ENCODE measurements at regions of chr14 and their contacts with region 1.

Region 1: DNA sequence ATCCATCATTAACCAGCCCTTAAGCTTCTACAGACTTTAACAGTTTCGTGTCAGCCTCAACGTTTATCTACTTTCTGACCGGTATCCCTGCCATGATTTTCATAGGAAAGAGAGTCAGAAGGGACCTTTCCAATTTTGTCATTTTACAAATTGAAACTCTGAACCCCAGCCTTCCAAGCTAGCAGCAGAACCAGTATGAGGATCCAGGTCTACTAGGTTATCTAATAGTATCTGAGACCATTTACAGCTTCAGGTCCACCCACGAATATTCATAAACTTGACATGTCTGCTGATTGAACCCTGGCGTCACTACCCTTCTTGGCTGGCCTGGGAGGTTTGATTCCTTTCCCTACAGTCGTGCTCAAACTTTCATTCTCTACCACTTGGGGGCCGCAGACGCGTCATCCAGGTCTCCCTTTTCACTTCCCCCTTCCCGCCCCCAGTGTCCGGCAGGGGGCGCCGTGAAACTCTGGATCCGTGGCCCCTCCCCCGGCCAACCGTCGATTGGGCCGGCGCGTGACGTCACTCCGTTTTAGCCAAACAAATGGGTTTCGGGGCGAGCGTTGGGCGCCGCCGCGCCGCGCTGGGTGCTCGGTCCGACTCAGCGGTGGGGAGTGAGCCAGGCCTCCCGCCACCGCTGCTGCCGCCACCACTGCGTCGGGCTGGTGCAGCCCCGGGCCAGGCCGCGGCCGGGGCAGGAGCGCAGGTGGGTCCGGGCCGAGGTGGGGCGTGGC is at the start of gene FBXO34:
- DNase-seq: peak; percentile 99
- H3K4me3 Mint-ChIP-seq: peak within 1 kb of the TSS; percentile 87
- H3K27ac Mint-ChIP-seq: peak within 1 kb of the TSS; percentile 90
- H3K4me1 Mint-ChIP-seq: peaks cover 39% of the 10 kb centered on the region
- H3K27me3 Mint-ChIP-seq: peaks cover 2% of the 10 kb centered on the region
- total RNA-seq, gene FBXO34: 19.8 to 22.0 TPM

Region 2: DNA sequence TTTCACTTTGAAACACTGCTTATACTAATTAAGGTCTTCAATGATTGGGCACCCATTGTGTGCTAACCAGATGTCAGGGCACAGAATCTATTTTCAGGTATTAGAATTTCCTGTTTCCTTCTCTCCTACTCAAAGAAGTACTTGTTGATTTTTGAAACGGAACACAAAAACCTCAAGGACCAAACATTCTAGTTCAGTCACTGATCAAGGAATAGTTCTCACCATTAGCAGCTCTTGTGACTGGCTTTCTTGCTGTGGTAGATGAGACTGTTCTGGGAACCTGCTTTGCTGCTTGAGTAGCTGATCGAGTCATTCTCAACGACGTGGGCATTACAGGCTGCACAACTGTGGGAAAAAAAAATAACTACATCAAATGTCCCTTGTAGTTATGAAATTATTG is 90.6 kb before region 1 on chr14:
- CTCF ChIA-PET with region 1: no interaction called
- POLR2A ChIA-PET with region 1: no interaction called
- intact Hi-C with region 1: no loop called
- DNase-seq: no peak
- H3K4me3 Mint-ChIP-seq: no peak overlapping the region
- H3K27ac Mint-ChIP-seq: no peak overlapping the region
- H3K4me1 Mint-ChIP-seq: peaks cover 9% of the 10 kb centered on the region
- H3K27me3 Mint-ChIP-seq: no peaks in the 10 kb centered on the region

Region 3: GRCh38 chr14:55212634-55213033 is 58.4 kb before region 1 on chr14:
- CTCF ChIA-PET with region 1: interaction called, 5 read pairs
- POLR2A ChIA-PET with region 1: no interaction called
- intact Hi-C with region 1: loop called (anchors 2 kb)
- DNase-seq: no peak
- H3K4me3 Mint-ChIP-seq: no peak overlapping the region
- H3K27ac Mint-ChIP-seq: no peak overlapping the region
- H3K4me1 Mint-ChIP-seq: peaks cover 2% of the 10 kb centered on the region
- H3K27me3 Mint-ChIP-seq: no peaks in the 10 kb centered on the region

Region 4: DNA sequence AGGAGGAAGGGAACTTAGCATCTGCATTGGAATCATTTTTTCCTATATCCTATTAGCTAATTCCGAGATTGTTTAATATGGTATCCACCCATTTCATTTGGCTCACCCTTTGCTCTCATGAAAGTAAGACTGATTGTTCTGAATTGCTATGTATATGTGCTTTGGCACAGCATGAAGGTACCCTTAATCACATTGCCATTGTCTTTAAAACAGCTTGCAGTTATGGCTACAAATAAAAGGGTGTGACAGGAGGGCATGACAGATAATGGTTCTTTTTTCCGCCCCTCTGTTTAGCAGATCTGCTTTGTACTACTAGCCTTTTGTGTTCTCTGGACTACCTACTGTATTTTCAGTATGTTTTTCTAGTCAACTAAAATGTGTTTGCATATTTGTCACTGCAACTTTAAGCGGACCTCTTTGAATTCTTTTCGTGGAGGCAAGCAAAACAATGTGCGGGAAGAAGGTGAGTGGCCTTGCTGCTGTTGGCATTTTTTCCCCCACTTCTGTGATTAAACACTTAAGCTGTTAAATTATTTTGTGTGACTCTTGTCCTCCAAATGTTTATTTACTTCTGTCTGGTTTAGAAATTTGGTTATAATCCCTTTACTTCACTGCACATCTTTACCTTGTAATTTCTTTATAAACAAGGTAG is 36.1 kb after region 1 on chr14:
- CTCF ChIA-PET with region 1: interaction called, 5 read pairs
- POLR2A ChIA-PET with region 1: interaction called, 4 read pairs
- intact Hi-C with region 1: loop called (anchors 5 kb)
- DNase-seq: no peak
- H3K4me3 Mint-ChIP-seq: no peak overlapping the region
- H3K27ac Mint-ChIP-seq: no peak overlapping the region
- H3K4me1 Mint-ChIP-seq: peaks cover 42% of the 10 kb centered on the region
- H3K27me3 Mint-ChIP-seq: no peaks in the 10 kb centered on the region

Region 5: GRCh38 chr14:55348766-55349453 is 77.9 kb after region 1 on chr14:
- CTCF ChIA-PET with region 1: interaction called, 180 read pairs
- POLR2A ChIA-PET with region 1: no interaction called
- intact Hi-C with region 1: loop called (anchors 1 kb)
- DNase-seq: peak; percentile 29
- H3K4me3 Mint-ChIP-seq: peak overlapping the region; percentile 9
- H3K27ac Mint-ChIP-seq: no peak overlapping the region
- H3K4me1 Mint-ChIP-seq: peaks cover 58% of the 10 kb centered on the region
- H3K27me3 Mint-ChIP-seq: no peaks in the 10 kb centered on the region

Region 6: GRCh38 chr14:55411426-55412389 is 140.7 kb after region 1 on chr14 and contains the start of gene ATG14:
- CTCF ChIA-PET with region 1: interaction called, 9 read pairs
- POLR2A ChIA-PET with region 1: no interaction called
- intact Hi-C with region 1: loop called (anchors 1 kb)
- DNase-seq: peak; percentile 87
- H3K4me3 Mint-ChIP-seq: peak within 1 kb of the TSS; percentile 79
- H3K27ac Mint-ChIP-seq: peak within 1 kb of the TSS; percentile 71
- H3K4me1 Mint-ChIP-seq: peaks cover 31% of the 10 kb centered on the region
- H3K27me3 Mint-ChIP-seq: no peaks in the 10 kb centered on the region
- total RNA-seq, gene ATG14: 5.0 to 5.1 TPM

Region 7: DNA sequence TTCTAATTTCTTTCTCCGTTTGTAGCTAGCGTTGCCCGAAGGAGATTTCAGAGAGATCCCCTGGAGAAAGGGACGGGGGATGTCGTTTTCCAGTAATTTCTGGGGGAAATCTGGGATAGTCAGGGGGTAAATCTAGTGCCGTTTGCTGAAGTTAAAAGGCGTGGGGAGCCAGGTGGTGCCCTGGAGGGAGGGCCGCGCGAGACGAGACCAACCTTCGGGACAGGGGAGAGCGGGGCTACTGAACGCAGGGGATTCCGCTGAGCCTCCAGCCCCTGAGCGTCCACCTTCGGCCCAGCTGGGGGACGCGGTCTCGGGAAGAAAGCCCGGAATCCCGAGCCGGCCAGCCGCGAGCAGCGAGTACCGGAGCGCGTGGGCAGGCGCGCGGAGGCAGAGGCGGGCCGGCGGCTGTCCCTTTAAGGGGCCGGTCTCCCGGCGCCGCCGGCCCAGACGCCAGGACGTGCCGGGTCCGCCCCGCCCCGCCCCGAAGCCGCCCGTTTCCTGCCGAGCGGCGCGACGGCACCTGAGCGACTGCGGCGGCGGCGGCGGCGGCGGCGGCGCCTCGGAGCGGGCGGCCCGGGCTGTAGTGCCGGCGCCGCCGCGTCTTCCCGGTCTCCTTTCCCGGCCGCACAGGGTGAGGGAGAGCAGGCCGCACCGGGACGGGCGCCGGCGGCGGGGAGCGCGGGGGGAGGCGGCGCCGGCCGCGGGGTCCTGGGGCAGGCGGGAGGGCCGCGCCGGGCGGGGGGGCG is 308.9 kb after region 1 on chr14 and contains the start of gene KTN1:
- CTCF ChIA-PET with region 1: interaction called, 4 read pairs
- POLR2A ChIA-PET with region 1: no interaction called
- intact Hi-C with region 1: loop called (anchors 5 kb)
- DNase-seq: peak; percentile 87
- H3K4me3 Mint-ChIP-seq: peak within 1 kb of the TSS; percentile 92
- H3K27ac Mint-ChIP-seq: peak within 1 kb of the TSS; percentile 90
- H3K4me1 Mint-ChIP-seq: peaks cover 31% of the 10 kb centered on the region
- H3K27me3 Mint-ChIP-seq: no peaks in the 10 kb centered on the region
- total RNA-seq, gene KTN1: 126 to 134 TPM

Measured in activated CD4-positive, alpha-beta memory T cell treated with anti-CD3 and anti-CD28 coated beads for 36 hours (primary cell).